BJ (cell line): ENCODE measurements at regions of chr5 and their contacts with region 1.

Region 1: DNA sequence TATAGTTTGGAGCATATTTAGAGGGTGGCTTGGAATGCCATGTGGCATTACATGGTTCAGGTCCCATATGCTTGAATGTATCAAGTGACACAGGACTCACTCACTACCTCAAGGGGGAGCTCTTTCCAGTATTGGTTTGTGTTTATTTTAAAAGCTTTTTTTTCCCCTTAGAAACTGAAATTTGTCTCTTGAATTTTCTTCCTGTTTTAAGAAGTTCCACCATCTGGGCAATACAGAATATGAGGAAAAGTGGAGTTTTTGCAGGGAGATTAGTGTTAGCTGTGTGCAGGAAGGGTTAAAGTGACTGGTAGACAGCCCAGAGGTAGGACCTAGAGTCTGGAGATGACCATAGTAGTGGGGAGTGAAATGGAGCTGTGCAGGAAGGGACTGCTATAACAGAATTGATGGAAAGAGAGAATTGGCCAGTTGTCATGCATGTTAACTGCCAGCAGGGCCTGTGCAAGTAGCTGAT is 36.6 kb downstream of the CTNNA1 start:
- DNase-seq: no peak
- H3K4me3 ChIP-seq: no peak overlapping the region
- H3K27me3 ChIP-seq: no peaks in the 10 kb centered on the region
- CTCF ChIP-seq: peak; percentile 48

Region 2: GRCh38 chr5:138803285-138803684 is 13.5 kb after region 1 on chr5:
- CTCF ChIA-PET with region 1: interaction called, 20 read pairs
- POLR2A ChIA-PET with region 1: no interaction called
- DNase-seq: no peak
- H3K4me3 ChIP-seq: no peak overlapping the region
- H3K27me3 ChIP-seq: no peaks in the 10 kb centered on the region
- CTCF ChIP-seq: no peak

Region 3: GRCh38 chr5:138819081-138819480 is 29.3 kb after region 1 on chr5:
- CTCF ChIA-PET with region 1: interaction called, 14 read pairs
- POLR2A ChIA-PET with region 1: no interaction called
- DNase-seq: no peak
- H3K4me3 ChIP-seq: no peak overlapping the region
- H3K27me3 ChIP-seq: no peaks in the 10 kb centered on the region
- CTCF ChIP-seq: no peak